ENCODE measurements at regions of chr7 and their contacts with region 1.

Region 1: GRCh38 chr7:94449148-94449725 is 54.5 kb downstream of the COL1A2 start:
- DNase-seq: no peak

Region 2: GRCh38 chr7:94239661-94240234 is 209.5 kb before region 1 on chr7:
- intact Hi-C with region 1: no loop called
- DNase-seq: peak; percentile 75

Region 3: DNA sequence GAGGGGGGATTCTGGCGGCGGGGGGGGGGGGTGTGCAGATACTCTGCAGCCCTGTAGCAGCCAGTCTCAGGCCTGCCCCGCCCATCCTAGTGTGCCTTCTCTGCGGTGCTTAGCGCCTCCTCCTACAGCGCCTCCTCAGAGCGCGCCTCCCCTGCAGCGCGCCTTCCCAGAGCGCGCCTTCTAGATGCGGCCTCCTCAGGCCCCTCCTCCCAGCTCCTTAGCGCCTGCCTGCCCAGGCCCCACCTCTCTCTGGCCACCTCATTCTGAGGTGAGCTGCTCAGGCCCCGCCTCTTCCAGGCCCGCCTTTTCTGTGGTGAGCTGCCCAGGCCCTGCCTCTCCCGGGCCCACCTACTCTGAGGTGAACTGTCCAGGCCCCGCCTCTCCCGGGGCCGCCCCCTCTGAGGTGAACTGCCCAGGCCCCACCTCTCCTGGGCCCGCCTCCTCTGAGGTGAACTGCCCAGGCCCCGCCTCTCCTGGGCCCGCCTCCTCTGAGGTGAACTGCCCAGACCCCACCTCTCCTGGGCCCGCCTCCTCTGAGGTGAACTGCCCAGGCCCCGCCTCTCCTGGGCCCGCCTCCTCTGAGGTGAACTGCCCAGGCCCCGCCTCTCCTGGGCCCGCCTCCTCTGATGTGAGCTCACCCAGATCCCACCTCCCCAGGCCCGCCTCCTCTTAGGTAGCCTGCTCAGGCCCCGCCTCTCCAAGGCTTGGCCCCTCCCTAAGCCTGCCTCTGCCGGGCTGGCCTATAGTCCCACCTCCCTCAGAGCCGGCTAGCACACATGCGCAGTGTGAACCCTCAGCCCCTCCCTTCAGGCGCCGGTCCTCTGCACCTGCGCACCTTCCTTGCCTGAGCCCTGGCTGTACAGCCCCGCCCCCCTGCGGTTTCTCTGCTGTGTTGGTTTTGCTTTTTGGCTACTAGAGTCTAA is 208.8 kb after region 1 on chr7:
- intact Hi-C with region 1: loop called (anchors 5 kb)
- DNase-seq: peak; percentile 96

Region 4: DNA sequence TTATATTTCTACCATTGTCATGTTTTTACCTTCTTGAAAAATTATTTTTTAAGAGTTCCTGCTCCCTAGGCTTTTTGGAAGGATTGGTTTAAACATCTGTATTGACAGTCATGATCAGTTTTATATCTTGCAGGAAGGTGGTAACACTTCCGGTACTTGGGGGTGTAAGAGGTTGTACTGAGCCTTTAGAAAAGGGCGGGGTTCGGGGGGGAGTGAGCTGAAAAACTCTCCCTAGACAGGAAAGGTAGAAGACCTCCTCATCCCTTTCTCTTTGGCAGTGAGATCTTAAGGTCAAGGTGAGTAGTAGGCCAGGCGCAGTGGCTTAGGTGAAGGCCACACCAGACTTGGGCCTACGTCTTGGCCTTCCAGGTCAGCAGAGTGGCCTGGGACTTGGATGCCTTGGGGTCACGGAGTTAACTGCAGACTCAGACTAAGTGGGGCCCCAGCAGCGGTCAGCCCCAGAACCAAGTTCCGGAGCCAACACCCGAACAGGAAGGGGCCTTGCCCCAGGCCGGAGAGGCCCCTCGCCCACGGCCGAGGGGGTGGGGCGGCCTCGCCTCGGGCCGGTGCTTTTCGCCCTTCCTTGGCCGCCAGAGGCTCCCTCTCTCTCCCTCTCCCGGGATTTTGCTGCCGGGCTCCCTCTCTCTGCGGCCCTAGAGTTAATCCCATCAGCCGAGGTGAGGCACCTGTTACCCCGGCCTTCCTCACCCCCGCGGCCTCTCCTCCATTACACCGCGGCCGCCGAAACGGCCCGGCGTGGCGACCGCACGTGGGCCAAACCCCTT is 458.0 kb after region 1 on chr7 and contains the start of gene PPP1R9A:
- intact Hi-C with region 1: loop called (anchors 10 kb)
- DNase-seq: peak; percentile 75
- total RNA-seq, gene PPP1R9A: 42.8 TPM

Region 5: GRCh38 chr7:95199779-95200558 is 750.7 kb after region 1 on chr7:
- intact Hi-C with region 1: loop called (anchors 5 kb)
- DNase-seq: no peak

Region 6: DNA sequence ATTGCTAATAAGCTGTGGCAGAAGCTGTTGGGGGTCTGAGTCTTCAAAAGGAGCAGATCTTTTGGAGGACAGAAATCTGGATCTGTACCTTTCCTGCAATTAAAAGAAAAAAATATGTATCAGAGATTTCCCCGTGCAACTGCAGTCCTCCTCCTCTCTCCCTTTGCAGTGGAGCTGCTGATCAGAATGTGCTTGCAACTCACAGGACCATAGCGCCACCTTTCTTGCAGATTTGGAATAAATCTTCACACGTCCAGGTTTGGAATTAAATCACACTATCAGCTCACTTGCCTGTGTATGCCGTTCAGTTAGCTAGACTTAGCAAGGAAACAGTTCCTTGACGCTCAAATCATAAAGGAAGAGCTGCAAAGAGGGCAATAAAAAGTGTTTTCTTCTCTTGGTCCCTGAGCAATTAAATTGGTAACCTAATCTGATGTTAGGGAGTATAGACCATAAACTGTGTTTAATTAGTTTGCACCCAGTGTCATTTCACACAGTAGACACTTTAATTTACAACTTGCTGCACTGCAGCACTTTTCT is 797.7 kb after region 1 on chr7:
- intact Hi-C with region 1: loop called (anchors 10 kb)
- DNase-seq: no peak

Region 7: DNA sequence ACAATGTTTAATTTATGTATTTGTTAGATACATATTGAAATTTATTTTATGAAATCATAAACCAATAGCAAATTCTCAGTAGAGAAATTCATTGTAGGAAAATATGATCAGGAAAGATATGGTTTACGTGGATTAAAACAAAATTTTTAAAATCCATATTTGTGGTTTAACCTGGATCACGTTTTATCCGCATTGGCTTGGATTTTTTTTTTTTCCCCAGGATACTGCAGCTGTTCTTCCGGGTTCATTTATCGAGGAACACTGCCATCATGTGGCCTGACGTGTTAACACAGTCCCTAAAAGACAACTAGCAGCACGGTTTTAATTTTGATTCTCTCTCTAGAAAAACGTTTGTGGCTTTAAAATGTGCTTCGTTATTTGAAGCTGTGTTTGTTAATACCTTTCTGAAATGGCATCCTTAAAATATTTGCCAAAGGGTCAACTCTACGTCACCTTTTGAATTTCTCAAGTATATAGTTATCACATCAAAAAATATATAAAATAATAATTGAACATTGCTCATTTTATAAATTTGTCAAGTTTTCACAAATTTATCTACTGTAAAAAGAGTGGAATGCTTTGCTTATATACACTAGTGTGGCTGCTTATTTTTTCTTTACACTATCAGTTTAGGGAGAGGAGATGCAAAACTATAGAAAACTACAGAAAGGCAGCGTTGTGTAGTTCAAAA is 1027.8 kb after region 1 on chr7:
- intact Hi-C with region 1: loop called (anchors 5 kb)
- DNase-seq: no peak